ENCODE measurements at regions of chr1 and their contacts with region 1.

Region 1: GRCh38 chr1:108816049-108816893 is 40.6 kb downstream of the AKNAD1 start:
- DNase-seq: peak; percentile 88
- H3K4me3 ChIP-seq: peak overlapping the region; percentile 13; the same call in 1 of the 2 replicates
- H3K27me3 ChIP-seq: no peaks in the 10 kb centered on the region
- CTCF ChIP-seq: no peak

Region 2: GRCh38 chr1:108897865-108898720 is 81.8 kb after region 1 on chr1:
- CTCF ChIA-PET with region 1: interaction called, 11 read pairs
- POLR2A ChIA-PET with region 1: no interaction called
- DNase-seq: no peak
- H3K4me3 ChIP-seq: no peak overlapping the region
- H3K27me3 ChIP-seq: no peaks in the 10 kb centered on the region
- CTCF ChIP-seq: peak; percentile 63

Measured in BJ (cell line).